Activated B cell treated with CpG ODN at 0.5 μM for 24 hours (primary cell): ENCODE measurements at regions of chr6 and their contacts with region 1.

Region 1: GRCh38 chr6:53651764-53652401 is 13.7 kb downstream of the KLHL31 start:
- DNase-seq: peak; percentile 63
- ATAC-seq: peak; percentile 88
- H3K4me3 Mint-ChIP-seq: peak overlapping the region; percentile 87
- H3K27ac Mint-ChIP-seq: peak overlapping the region; percentile 68
- H3K4me1 Mint-ChIP-seq: peaks cover 20% of the 10 kb centered on the region
- H3K27me3 Mint-ChIP-seq: peaks cover 4% of the 10 kb centered on the region
- CTCF ChIP-seq: no peak

Region 2: DNA sequence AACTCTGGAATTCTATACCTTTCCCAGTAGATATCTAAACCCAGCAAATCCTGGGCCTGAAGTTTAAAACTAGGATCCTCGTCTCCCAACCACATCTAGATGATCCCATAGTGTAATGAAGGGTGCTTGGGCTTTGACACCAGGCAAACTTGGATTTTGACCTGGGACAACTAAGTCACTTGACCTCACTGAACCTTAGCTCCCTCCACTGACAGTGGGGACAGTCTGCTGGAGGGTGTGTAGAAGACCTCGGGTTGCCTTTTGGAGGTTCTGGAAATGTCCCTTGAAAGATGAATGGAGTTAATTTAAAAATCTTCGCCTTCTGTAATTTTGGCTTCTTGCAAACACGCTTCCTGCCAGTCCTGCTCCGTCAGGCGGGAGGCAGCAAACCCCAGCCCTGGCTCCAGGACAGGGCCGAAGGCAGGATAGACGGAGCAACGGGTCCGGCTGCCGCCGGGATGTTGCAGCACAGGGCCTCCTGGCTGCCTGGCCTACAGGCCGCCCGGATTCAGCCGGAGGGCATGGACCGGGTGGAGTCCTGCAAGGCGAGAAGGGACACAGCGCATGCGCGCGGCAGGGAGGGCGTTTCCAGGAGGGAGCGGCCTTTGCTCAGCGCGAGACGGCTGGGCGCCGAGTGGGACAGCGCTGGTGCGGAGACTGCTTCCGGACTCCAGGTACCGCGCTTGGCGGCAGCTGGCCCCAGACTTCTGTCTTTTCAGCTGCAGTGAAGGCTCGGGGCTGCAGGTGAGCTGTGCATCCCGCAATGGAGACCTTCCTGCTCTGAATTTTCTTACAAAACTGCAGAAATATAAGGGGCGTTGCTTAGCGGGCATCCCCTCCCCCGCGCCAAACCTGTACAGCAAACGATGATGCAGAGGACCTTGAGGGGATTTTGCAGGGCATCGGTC is 981.1 kb before region 1 on chr6 and contains the start of gene TMEM14A:
- CTCF ChIA-PET with region 1: no interaction called
- POLR2A ChIA-PET with region 1: no interaction called
- intact Hi-C with region 1: loop called (anchors 5 kb)
- DNase-seq: peak; percentile 88
- ATAC-seq: peak; percentile 97
- H3K4me3 Mint-ChIP-seq: peak within 1 kb of the TSS; percentile 86
- H3K27ac Mint-ChIP-seq: peak within 1 kb of the TSS; percentile 69
- H3K4me1 Mint-ChIP-seq: peaks cover 39% of the 10 kb centered on the region
- H3K27me3 Mint-ChIP-seq: no peaks in the 10 kb centered on the region
- CTCF ChIP-seq: no peak
- total RNA-seq, gene TMEM14A: 6.6 and 7.7 TPM in 2 replicates

Region 3: GRCh38 chr6:53103992-53104675 is 547.7 kb before region 1 on chr6:
- CTCF ChIA-PET with region 1: no interaction called
- POLR2A ChIA-PET with region 1: no interaction called
- intact Hi-C with region 1: loop called (anchors 1 kb)
- DNase-seq: no peak
- ATAC-seq: peak; percentile 28
- H3K4me3 Mint-ChIP-seq: no peak overlapping the region
- H3K27ac Mint-ChIP-seq: no peak overlapping the region
- H3K4me1 Mint-ChIP-seq: no peaks in the 10 kb centered on the region
- H3K27me3 Mint-ChIP-seq: no peaks in the 10 kb centered on the region
- CTCF ChIP-seq: no peak

Region 4: DNA sequence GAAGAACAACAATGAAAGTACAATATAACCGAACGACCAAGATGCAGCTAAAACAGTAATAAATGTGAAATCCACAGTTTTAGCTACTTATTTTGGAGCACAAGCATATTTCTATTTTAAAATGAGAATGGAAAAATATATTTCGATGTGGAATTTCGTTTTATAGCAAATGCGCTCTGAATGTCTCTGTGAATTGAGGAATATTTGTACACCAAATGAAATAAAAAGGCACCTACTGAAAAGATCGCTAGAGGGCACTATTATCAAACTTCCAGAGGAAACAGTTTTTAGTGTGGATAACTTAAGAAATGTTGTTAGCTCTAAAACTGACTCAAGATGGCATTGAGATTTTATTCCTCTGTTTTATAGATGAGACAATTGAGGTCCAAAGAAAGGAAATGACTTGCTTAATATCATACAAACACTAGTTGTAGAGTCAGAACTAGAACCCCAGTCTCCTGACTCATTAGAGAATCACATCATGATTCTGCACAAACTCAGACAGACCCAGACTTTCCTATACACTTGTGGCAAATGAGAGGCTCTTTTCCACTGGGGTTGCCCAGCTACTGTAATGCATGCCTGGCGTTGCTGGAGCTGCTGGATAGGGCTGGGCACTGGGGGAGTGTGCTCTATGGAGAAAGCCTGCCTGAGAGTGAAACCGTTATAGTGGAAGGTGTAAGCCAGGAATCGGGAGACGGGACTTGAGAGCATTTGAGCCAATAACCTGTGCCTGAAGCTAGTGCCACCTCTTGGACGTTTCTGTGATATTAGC is 158.8 kb before region 1 on chr6:
- CTCF ChIA-PET with region 1: interaction called, 78 read pairs
- POLR2A ChIA-PET with region 1: no interaction called
- intact Hi-C with region 1: loop called (anchors 1 kb)
- DNase-seq: no peak
- ATAC-seq: peak; percentile 14
- H3K4me3 Mint-ChIP-seq: no peak overlapping the region
- H3K27ac Mint-ChIP-seq: no peak overlapping the region
- H3K4me1 Mint-ChIP-seq: peaks cover 5% of the 10 kb centered on the region
- H3K27me3 Mint-ChIP-seq: no peaks in the 10 kb centered on the region
- CTCF ChIP-seq: peak; percentile 64

Region 5: DNA sequence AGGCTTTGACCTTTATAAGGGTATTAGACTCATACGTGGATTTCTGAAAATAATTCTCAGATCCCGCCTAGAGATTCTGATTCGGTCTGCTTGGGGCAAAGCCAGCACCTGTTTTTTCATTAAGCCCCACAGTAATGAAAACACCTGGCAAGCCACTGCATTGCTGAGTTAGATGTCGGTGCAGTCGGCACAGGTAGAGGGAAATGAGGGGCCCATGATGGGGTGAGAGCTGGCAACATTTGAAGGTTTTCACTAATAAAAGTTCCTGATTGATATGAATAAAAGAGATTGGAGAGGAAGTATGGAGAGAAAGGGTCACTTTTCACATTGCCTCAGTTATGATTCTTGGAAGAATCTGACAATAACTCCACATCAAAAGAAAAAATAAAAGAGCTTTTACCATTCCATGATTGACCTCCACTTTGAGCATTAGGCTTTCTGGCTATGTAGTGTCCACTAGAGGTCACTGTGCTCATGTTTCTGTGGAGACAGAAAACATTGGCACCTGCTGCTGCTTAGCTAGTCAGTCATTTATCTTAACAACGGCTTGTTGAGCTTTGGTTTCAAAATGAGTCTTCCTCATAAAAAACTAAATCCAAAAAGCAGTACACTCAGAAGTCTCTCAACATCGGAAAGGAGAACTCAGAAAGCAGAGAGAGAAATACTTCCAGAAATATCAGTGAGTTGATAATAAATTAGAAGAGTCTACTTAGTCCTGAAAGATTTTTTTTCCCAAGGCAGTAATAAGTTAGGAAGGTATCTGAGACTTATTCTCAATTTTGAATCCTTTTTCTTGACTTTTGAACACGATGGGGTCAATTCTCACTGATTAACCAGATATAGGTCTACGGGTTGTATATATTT is 66.9 kb after region 1 on chr6:
- CTCF ChIA-PET with region 1: interaction called, 4 read pairs
- POLR2A ChIA-PET with region 1: no interaction called
- intact Hi-C with region 1: loop called (anchors 2 kb)
- DNase-seq: no peak
- ATAC-seq: peak; percentile 81
- H3K4me3 Mint-ChIP-seq: no peak overlapping the region
- H3K27ac Mint-ChIP-seq: no peak overlapping the region
- H3K4me1 Mint-ChIP-seq: peaks cover 5% of the 10 kb centered on the region
- H3K27me3 Mint-ChIP-seq: peaks cover 13% of the 10 kb centered on the region
- CTCF ChIP-seq: peak; percentile 59

Region 6: GRCh38 chr6:53794720-53795253 is 142.9 kb after region 1 on chr6 and contains the start of gene LRRC1:
- CTCF ChIA-PET with region 1: no interaction called
- POLR2A ChIA-PET with region 1: no interaction called
- intact Hi-C with region 1: loop called (anchors 1 kb)
- DNase-seq: peak; percentile 94
- ATAC-seq: peak; percentile 76
- H3K4me3 Mint-ChIP-seq: peak within 1 kb of the TSS; percentile 99
- H3K27ac Mint-ChIP-seq: peak within 1 kb of the TSS; percentile 91
- H3K4me1 Mint-ChIP-seq: peaks cover 27% of the 10 kb centered on the region
- H3K27me3 Mint-ChIP-seq: peaks cover 2% of the 10 kb centered on the region
- CTCF ChIP-seq: no peak
- total RNA-seq, gene LRRC1: 3.0 and 4.7 TPM in 2 replicates